H1 (cell line): ENCODE measurements at regions of chr21 and their contacts with region 1.

Region 1: DNA sequence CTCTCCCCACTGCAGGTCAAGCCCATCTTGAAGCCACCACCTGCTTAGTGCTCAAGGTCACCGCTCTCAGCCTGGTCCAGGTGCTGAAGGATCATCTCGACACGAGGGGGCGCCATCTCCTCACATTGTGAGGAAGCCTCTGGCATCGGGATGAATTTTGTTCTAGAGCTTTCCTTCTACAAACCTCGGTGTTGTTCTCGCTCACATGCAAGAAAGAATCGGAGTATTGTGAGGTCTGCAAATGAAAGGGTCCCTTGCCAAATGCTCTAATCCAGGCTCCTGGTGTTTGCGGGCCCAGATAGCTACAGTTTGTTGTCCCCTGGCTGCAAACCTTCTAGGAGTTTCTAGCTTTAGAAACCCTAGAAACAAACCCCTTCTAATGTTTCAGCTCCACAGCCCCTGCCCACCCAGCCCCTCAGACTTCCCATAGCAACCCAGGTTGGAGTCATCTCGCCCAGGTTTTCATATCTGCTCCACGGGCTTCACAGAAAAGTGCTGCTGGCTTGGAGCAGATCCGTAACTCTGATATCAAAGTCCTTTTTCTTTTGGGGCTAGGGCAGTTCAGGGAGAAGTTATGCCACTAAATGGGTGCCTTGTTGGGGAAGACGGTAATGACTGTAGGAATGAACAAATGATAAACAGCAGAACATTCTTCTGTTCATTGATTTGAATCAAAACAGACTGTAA is 8.6 kb upstream of the ATP5PO start:
- DNase-seq: peak; percentile 62 to 97
- H3K4me3 ChIP-seq: no peak overlapping the region
- H3K27ac ChIP-seq: no peak overlapping the region
- H3K4me1 ChIP-seq: no peaks in the 10 kb centered on the region
- H3K27me3 ChIP-seq: no peaks in the 10 kb centered on the region
- CTCF ChIP-seq: peak; percentile 93 to 97 (median 97)
- EP300 ChIP-seq: no peak; a peak in 1 of 3 replicates
- POLR2A ChIP-seq: no peak
- RAD21 ChIP-seq: peak; percentile 99 to 100

Region 2: GRCh38 chr21:33947451-33948095 is 23.4 kb after region 1 on chr21:
- CTCF ChIA-PET with region 1: interaction called, 18 read pairs
- POLR2A ChIA-PET with region 1: interaction called, 10 read pairs
- DNase-seq: peak; percentile 46 to 53
- H3K4me3 ChIP-seq: peak overlapping the region in 2 of 4 experiments; percentile 8 to 48; a peak in 4 of 8 replicates
- H3K27ac ChIP-seq: peak overlapping the region; percentile 91
- H3K4me1 ChIP-seq: peaks cover 10 to 21% (median 15%) of the 10 kb centered on the region in 4 experiments; a peak in 6 of 7 replicates
- H3K27me3 ChIP-seq: no peaks in the 10 kb centered on the region
- CTCF ChIP-seq: no peak
- EP300 ChIP-seq: no peak
- POLR2A ChIP-seq: peak; percentile 22 to 24; a peak in 2 of 3 replicates
- RAD21 ChIP-seq: 0 out of 4 replicates have a peak, but pooled peaks of 1 of the 2 experiments have one; percentile 2

Region 3: DNA sequence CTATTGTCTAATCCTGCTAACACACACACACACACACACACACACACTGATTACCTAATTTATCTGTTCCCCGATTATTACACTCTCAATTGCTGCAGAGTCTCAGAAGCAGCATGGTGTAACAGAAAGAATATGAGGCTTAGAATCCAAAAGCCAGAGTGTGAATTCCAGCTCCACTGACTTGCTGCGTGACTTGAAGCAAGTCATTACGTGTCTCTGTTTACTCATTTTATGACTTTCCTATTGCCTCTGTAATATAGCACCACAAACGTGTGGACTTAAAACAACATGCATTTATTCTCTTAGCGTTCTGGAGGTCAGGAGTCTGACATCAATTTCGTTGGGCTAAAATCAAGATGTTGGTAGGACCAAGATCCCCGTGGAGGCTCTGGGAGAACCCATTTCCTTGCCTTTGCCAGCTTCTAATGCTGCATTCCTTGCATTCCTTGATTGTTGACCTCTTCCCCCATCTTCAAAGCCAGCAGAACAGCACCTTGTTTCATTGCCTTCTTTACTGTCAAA is 47.3 kb after region 1 on chr21:
- CTCF ChIA-PET with region 1: interaction called, 16 read pairs
- POLR2A ChIA-PET with region 1: no interaction called
- DNase-seq: peak in 1 of 2 experiments; percentile 45
- H3K4me3 ChIP-seq: no peak overlapping the region
- H3K27ac ChIP-seq: peak overlapping the region; percentile 1; the same call in 1 of the 2 replicates
- H3K4me1 ChIP-seq: peaks cover 6 to 16% (median 13%) of the 10 kb centered on the region in 4 experiments; a peak in 6 of 7 replicates
- H3K27me3 ChIP-seq: no peaks in the 10 kb centered on the region
- CTCF ChIP-seq: no peak
- EP300 ChIP-seq: no peak
- POLR2A ChIP-seq: no peak
- RAD21 ChIP-seq: no peak

Region 4: GRCh38 chr21:34073032-34073869 is 149.0 kb after region 1 on chr21 and contains the starts of genes MRPS6 and SLC5A3:
- CTCF ChIA-PET with region 1: interaction called, 17 read pairs
- POLR2A ChIA-PET with region 1: interaction called, 12 read pairs
- DNase-seq: peak; percentile 67 to 91
- H3K4me3 ChIP-seq: peak within 1 kb of the TSS; percentile 67 to 92 (median 76)
- H3K27ac ChIP-seq: peak within 1 kb of the TSS; percentile 65; the same call in 1 of the 2 replicates
- H3K4me1 ChIP-seq: peaks cover 0 to 11% (median 3%) of the 10 kb centered on the region in 4 experiments; a peak in 6 of 7 replicates
- H3K27me3 ChIP-seq: no peaks in the 10 kb centered on the region; a peak in 2 of 7 replicates
- CTCF ChIP-seq: peak; percentile 37 to 63 (median 53)
- EP300 ChIP-seq: no peak
- POLR2A ChIP-seq: peak; percentile 90 to 95
- RAD21 ChIP-seq: peak; percentile 33 to 56
- total RNA-seq, gene MRPS6: 154 and 156 TPM in 2 replicates
- total RNA-seq, gene SLC5A3: 19.4 TPM in 2 replicates

Region 5: DNA sequence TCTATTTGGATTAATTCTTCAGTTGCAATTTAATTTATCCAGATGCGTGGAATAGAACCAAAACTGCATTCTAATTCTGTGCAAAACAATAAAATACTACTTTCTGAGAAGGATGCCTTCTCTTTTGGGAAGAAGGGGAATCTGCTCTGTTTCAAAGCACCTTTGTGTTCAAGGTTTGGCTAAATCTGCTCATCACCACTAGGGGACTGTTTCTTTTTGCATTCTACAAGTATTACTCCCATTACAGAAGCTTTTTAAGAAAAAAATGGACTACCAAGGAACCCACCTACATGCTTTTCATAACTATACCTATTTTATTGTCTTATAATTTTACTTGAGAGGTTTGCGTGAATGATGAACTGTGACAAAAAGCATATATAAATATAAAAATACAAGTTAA is 167.4 kb after region 1 on chr21:
- CTCF ChIA-PET with region 1: interaction called, 20 read pairs
- POLR2A ChIA-PET with region 1: no interaction called
- DNase-seq: no peak
- H3K4me3 ChIP-seq: no peak overlapping the region
- H3K27ac ChIP-seq: no peak overlapping the region
- H3K4me1 ChIP-seq: peaks cover 2 to 17% (median 6%) of the 10 kb centered on the region in 4 experiments; a peak in 5 of 7 replicates
- H3K27me3 ChIP-seq: no peaks in the 10 kb centered on the region
- CTCF ChIP-seq: peak in 1 of 3 experiments; percentile 46; a peak in 2 of 4 replicates
- EP300 ChIP-seq: no peak
- POLR2A ChIP-seq: no peak
- RAD21 ChIP-seq: no peak; a peak in 1 of 4 replicates

Region 6: DNA sequence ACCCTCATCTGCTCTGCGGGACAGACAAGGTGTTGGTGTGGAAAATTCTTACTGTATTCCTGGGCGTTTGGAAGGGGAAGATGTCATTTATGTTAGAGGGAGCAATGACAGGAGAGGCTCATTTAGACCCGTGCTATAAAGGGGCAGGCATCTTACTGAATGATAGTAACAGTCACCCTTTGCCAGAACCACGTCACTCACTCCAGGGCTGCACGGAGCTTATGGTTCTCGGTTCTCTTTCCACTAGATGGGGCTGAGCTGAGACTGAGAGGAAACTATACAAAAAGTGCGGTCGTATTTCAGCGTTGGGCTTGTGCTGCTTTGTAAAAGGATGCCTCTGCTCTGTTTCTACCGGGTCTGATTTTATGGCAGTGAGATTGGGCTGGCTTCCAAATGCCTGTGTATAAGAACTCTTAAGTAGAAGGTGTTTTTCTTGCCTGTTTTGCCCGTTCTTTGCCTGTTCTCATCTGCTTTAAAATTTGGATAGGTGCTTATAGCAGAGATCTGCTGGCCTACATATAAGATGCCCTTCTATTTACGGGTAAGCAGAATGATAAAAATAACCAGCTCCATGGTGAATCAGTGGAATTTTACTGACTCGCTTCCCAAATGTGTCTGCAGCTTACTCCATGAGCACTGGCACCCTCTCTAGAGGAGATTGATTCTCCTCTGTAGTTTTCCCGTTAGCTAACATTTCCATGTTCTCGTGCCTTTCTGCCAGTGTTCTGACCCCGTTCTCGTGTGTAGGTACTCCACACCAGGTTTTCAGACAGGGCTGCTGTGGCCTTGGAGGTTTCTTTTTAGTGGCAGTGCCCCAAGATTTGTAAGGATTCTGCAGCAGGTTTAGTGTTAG is 205.0 kb after region 1 on chr21:
- CTCF ChIA-PET with region 1: interaction called, 17 read pairs
- POLR2A ChIA-PET with region 1: no interaction called
- DNase-seq: peak; percentile 5 to 50
- H3K4me3 ChIP-seq: peak overlapping the region in 3 of 4 experiments; percentile 18 to 41 (median 21); a peak in 3 of 8 replicates
- H3K27ac ChIP-seq: no peak overlapping the region
- H3K4me1 ChIP-seq: peaks cover 12 to 45% (median 37%) of the 10 kb centered on the region in 4 experiments
- H3K27me3 ChIP-seq: no peaks in the 10 kb centered on the region
- CTCF ChIP-seq: peak in 2 of 3 experiments; percentile 8 to 43; a peak in 2 of 4 replicates
- EP300 ChIP-seq: no peak
- POLR2A ChIP-seq: no peak
- RAD21 ChIP-seq: peak; percentile 36 to 40; a peak in 3 of 4 replicates

Region 7: GRCh38 chr21:34351786-34352241 is 427.6 kb after region 1 on chr21:
- CTCF ChIA-PET with region 1: interaction called, 119 read pairs
- POLR2A ChIA-PET with region 1: no interaction called
- DNase-seq: no peak
- H3K4me3 ChIP-seq: no peak overlapping the region
- H3K27ac ChIP-seq: no peak overlapping the region
- H3K4me1 ChIP-seq: no peaks in the 10 kb centered on the region; a peak in 1 of 7 replicates
- H3K27me3 ChIP-seq: no peaks in the 10 kb centered on the region; a peak in 1 of 7 replicates
- CTCF ChIP-seq: peak; percentile 45 to 56 (median 51)
- EP300 ChIP-seq: no peak
- POLR2A ChIP-seq: no peak
- RAD21 ChIP-seq: peak; percentile 80 to 82